Motor neuron (in vitro differentiated cells): ENCODE measurements at regions of chr7 and their contacts with region 1.

Region 1: GRCh38 chr7:158016180-158017097 is 571.2 kb downstream of the PTPRN2 start:
- ATAC-seq: peak in 5 of 8 experiments; percentile 28 to 50 (median 43)
- H3K4me3 ChIP-seq: no peak overlapping the region
- H3K27ac ChIP-seq: peak overlapping the region in 1 of 2 donors; percentile 71
- H3K4me1 ChIP-seq: peaks cover 0 to 44% of the 10 kb centered on the region in 2 donors

Region 2: DNA sequence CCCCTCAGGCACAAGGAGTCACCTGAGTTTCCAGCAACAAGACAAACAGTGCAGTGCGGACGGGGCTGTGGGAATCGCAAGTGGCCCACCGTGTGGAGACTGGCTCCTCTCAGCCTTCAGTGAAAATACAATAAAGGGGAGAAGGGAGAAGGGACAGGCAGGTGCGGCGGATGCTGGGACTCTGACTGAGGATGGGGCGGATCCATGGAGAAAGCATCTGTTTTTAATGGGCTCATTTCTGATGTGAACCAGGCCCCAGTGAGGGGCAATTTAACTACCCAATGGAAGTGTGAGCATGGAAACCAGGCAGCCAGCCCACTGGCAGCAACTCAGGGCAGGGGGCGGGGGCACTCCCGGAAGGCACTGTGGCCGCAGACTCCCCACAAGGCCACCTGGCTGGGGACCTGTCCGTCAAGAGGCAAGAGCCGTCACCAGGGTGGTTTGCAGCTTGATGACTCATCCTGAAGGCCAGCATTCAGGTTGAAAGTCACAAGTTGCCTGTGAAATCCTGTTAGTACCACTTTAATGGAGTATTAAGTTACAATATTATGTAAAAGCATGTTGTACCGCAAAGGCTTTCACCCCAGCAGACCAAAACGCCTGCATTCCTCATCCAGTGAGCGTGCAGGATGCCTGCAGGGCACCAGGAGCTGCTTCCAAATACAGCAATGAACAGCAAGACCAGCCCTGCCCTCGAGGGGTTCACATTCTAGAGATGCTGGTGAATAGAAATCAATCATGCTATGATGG is 94.8 kb after region 1 on chr7:
- in situ Hi-C with region 1: loop called in 1 of 9 experiments (anchors 25 kb)
- ATAC-seq: peak in 1 of 8 experiments; percentile 88
- H3K4me3 ChIP-seq: no peak overlapping the region
- H3K27ac ChIP-seq: no peak overlapping the region
- H3K4me1 ChIP-seq: no peaks in the 10 kb centered on the region